ENCODE measurements at regions of chr17 and their contacts with region 1.

Region 1: DNA sequence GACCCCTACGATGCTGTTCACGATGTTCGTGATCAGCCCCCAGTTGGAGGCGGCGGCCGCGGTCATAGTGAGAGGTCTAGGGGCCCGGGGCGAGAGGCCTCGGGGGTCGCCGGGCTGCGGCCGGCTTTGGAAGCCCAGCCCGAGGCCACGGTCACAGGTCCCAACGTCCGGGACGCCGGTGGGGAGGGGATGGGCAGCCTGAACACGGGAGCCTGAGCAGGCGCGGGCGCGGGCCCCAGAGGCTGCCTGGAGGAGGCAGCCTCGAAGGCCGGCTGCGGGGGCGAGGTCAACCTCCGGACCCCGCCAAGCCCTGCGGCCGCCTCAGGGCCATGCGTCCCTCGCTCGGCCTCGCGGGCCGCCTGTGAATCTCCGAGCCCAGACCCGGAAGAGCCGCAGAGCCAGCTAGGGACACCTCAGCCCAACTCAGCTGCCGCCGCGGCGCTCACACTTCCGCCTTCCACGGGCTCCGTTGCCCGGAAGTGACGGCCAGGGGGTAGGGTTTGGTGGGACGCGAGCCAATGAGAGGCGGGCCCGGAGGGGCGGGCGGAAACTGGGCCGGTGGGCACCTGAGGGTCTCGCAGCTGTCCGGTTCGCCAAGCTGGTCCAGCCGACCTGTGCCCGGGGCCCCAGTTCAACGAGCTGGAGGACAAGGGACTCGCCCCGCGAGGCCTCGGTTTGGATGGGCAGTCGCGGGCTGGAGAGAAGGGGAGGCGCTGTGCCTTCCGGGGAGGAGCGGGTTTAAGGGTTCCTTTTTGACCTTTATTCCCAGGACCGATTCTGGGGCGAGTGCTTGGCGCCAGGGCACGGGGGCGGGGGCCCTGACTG is at the start of gene SLC38A10:
- DNase-seq: peak; percentile 41
- ATAC-seq: peak; percentile 95
- H3K4me3 ChIP-seq: peak within 1 kb of the TSS; percentile 82
- H3K27ac ChIP-seq: peak within 1 kb of the TSS; percentile 93
- H3K4me1 ChIP-seq: peaks cover 6% of the 10 kb centered on the region; the same call in 1 of the 2 replicates
- H3K27me3 ChIP-seq: no peaks in the 10 kb centered on the region
- CTCF ChIP-seq: no peak
- EP300 ChIP-seq: no peak
- POLR2A ChIP-seq: peak; percentile 98
- RAD21 ChIP-seq: no peak
- polyA plus RNA-seq, gene SLC38A10: 0.52 to 3.2 TPM

Region 2: GRCh38 chr17:81394921-81395599 is 100.0 kb after region 1 on chr17 and contains the start of gene BAHCC1:
- CTCF ChIA-PET with region 1: interaction called, 5 read pairs
- POLR2A ChIA-PET with region 1: no interaction called
- RAD21 ChIA-PET with region 1: no interaction called
- SMC1A ChIA-PET with region 1: no interaction called
- in situ Hi-C with region 1: no loop called
- intact Hi-C with region 1: loop called (anchors 10 kb)
- DNase-seq: no peak
- ATAC-seq: peak; percentile 70
- H3K4me3 ChIP-seq: no peak within 1 kb of the TSS
- H3K27ac ChIP-seq: no peak within 1 kb of the TSS
- H3K4me1 ChIP-seq: no peaks in the 10 kb centered on the region
- H3K27me3 ChIP-seq: peaks cover 20 to 41% of the 10 kb centered on the region in 2 experiments
- CTCF ChIP-seq: no peak
- EP300 ChIP-seq: no peak
- POLR2A ChIP-seq: no peak; the same call in 1 of the 2 replicates
- RAD21 ChIP-seq: no peak
- polyA plus RNA-seq, gene BAHCC1: not detected